ENCODE measurements at regions of chr6 and their contacts with region 1.

Region 1: GRCh38 chr6:73969971-73970970 is 274.3 kb downstream of the CD109 start:
- DNase-seq: no peak
- ATAC-seq: no peak
- H3K4me3 Mint-ChIP-seq: no peak overlapping the region
- H3K27ac Mint-ChIP-seq: no peak overlapping the region
- H3K4me1 Mint-ChIP-seq: no peaks in the 10 kb centered on the region
- H3K27me3 Mint-ChIP-seq: no peaks in the 10 kb centered on the region
- CTCF ChIP-seq: peak; percentile 38

Region 2: GRCh38 chr6:73854998-73855718 is 115.1 kb before region 1 on chr6:
- CTCF ChIA-PET with region 1: interaction called, 4 read pairs
- POLR2A ChIA-PET with region 1: no interaction called
- intact Hi-C with region 1: loop called (anchors 5 kb)
- DNase-seq: peak; percentile 4
- ATAC-seq: peak; percentile 34
- H3K4me3 Mint-ChIP-seq: no peak overlapping the region
- H3K27ac Mint-ChIP-seq: no peak overlapping the region
- H3K4me1 Mint-ChIP-seq: peaks cover 2% of the 10 kb centered on the region
- H3K27me3 Mint-ChIP-seq: no peaks in the 10 kb centered on the region
- CTCF ChIP-seq: peak; percentile 89